Esophagus muscularis mucosa (tissue), 4 donors: ENCODE measurements at regions of chrX and their contacts with region 1.

Region 1: GRCh38 chrX:134990801-134991481 is at the start of gene SMIM10:
- DNase-seq: peak; percentile 91
- H3K4me3 ChIP-seq: peak within 1 kb of the TSS; percentile 53 to 64 (median 58)
- H3K27ac ChIP-seq: peak within 1 kb of the TSS; percentile 58 to 70 (median 63)
- H3K4me1 ChIP-seq: peaks cover 0 to 14% (median 5%) of the 10 kb centered on the region in 4 donors
- H3K27me3 ChIP-seq: peaks cover 0 to 6% (median 0%) of the 10 kb centered on the region in 4 donors
- CTCF ChIP-seq: no peak
- EP300 ChIP-seq: no peak
- POLR2A ChIP-seq: no peak
- total RNA-seq, gene SMIM10: 8.9 to 12.9 (median 11.6) TPM

Region 2: GRCh38 chrX:134813697-134814096 is 177.2 kb before region 1 on chrX:
- intact Hi-C with region 1: loop called (anchors 10 kb)
- DNase-seq: no peak
- H3K4me3 ChIP-seq: no peak overlapping the region
- H3K27ac ChIP-seq: no peak overlapping the region
- H3K4me1 ChIP-seq: peaks cover 0 to 5% (median 4%) of the 10 kb centered on the region in 4 donors
- H3K27me3 ChIP-seq: no peaks in the 10 kb centered on the region
- CTCF ChIP-seq: no peak
- EP300 ChIP-seq: no peak
- POLR2A ChIP-seq: no peak

Region 3: DNA sequence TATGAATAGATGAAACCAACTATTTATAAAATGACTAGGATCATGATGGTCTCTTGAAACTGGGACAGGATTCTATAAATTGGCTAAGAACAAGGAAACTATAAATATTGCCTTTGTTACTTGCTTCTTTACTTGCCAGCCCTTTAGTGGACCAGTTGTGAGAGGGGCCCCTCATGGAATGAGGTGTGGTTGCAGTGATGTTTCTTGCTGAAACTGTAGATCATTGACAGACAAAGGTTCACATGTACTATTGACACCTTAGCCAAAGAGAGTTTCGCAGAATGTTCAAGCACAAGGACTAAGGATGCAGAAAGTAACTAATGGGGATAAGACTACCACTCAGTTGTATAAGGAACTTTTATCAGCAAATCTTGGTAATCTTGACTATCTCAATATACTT is 135.2 kb before region 1 on chrX:
- intact Hi-C with region 1: no loop called
- DNase-seq: no peak
- H3K4me3 ChIP-seq: no peak overlapping the region
- H3K27ac ChIP-seq: no peak overlapping the region
- H3K4me1 ChIP-seq: no peaks in the 10 kb centered on the region
- H3K27me3 ChIP-seq: no peaks in the 10 kb centered on the region
- CTCF ChIP-seq: no peak
- EP300 ChIP-seq: no peak
- POLR2A ChIP-seq: no peak

Region 4: GRCh38 chrX:134936542-134936941 is 54.4 kb before region 1 on chrX:
- intact Hi-C with region 1: no loop called
- DNase-seq: no peak
- H3K4me3 ChIP-seq: no peak overlapping the region
- H3K27ac ChIP-seq: peak overlapping the region; percentile 41 to 63 (median 50)
- H3K4me1 ChIP-seq: peaks cover 0 to 30% (median 12%) of the 10 kb centered on the region in 4 donors
- H3K27me3 ChIP-seq: no peaks in the 10 kb centered on the region
- CTCF ChIP-seq: no peak
- EP300 ChIP-seq: no peak
- POLR2A ChIP-seq: no peak